Activated naive CD8-positive, alpha-beta T cell treated with anti-CD3 and anti-CD28 coated beads, Interleukin-2, amount 10 ng/mL, durations not matched to agents 7 days and 5 days (primary cell): ENCODE measurements at regions of chr11 and their contacts with region 1.

Region 1: DNA sequence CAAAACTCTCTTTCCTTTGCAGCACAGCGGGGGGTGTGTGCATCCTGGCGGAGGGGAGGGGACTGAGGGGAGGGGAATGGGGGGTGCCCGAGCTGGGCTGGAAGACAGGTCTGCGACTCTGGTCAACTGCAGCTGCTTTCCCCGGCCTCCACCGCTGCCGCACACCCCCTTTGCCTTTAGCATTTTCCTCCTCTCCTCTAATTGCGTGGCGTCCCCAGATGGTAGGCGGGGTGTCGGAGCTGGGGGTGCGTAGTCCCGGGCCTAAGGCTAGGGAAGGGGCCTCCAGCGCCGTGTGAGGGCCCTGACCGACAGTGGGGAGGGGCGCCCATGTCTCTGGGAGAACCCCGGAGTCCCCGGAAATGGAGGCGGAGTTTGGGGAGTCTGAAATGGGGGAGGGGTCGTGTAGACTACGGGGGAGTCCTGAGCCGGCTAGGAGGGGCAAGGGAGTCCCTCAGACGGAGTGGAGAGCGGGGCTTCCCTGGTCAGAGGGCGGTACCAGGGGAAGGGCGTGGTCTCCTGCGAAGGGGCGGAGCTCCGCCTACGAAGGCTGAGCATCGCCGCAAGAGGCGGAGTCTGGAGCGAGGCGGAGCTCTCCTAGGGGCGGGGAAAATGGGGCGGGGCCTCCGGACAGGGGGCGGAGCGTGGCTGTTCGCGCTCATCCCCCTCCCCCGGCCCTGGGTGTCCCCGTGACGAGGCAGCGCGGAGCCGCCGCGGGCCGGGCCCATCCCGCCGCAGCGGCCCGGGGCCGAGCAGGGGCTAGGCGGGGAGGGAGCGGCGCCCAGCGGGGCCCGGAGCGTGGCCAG is at the start of gene PELI3:
- DNase-seq: peak; percentile 94
- ATAC-seq: peak; percentile 80
- H3K4me3 Mint-ChIP-seq: peak within 1 kb of the TSS; percentile 92
- H3K27ac Mint-ChIP-seq: peak within 1 kb of the TSS; percentile 71
- H3K4me1 Mint-ChIP-seq: peaks cover 31% of the 10 kb centered on the region
- H3K27me3 Mint-ChIP-seq: peaks cover 3% of the 10 kb centered on the region
- total RNA-seq, gene PELI3: 10.6 to 10.7 TPM

Region 2: DNA sequence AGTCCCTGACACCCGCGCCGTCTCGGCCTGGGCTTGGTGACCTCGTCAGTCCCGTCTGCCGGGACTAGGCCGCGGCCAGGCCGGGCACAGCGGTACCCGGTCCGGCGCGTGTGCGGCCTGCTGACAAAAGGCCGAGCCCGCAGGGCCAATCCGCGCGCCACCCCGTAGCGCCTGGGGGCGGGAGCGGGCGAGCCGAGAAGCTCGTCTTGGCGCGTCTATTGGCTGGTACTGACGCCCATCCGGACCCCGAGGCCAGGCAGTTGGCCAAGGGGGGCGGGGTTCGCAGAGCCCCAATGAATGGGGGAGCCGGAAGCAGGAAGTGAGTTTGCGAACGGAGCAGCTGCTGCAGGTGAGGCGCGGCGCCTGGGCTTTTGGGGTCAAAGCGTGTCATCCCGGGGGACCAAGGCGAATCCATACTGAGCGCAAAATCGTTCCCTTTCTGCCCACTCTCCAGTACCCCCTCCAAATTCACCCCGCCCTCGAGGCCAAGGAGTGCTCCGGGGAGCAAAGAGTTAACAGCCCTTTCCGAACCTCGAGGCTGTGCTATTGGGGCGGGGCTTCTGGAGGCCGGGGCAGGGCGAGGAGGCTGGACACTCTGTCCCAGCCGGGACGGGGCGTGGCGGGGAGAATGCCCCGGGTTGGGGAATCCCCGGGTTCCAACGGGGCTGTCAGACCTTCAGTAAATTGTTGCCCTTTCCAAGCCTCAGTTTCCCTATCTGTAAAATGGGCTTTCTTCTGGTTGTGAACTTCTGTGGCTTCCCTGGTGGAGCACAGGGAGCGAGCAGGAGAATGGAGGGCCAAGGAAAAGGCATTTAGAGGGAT is 13.9 kb after region 1 on chr11 and contains the start of gene DPP3:
- POLR2A ChIA-PET with region 1: interaction called, 22 read pairs
- DNase-seq: peak; percentile 96
- ATAC-seq: peak; percentile 97
- H3K4me3 Mint-ChIP-seq: peak within 1 kb of the TSS; percentile 94
- H3K27ac Mint-ChIP-seq: peak within 1 kb of the TSS; percentile 88
- H3K4me1 Mint-ChIP-seq: peaks cover 20% of the 10 kb centered on the region
- H3K27me3 Mint-ChIP-seq: no peaks in the 10 kb centered on the region
- total RNA-seq, gene DPP3: 44.9 to 45.7 TPM